Calu3 (cell line): ENCODE measurements at regions of chr2 and their contacts with region 1.

Region 1: DNA sequence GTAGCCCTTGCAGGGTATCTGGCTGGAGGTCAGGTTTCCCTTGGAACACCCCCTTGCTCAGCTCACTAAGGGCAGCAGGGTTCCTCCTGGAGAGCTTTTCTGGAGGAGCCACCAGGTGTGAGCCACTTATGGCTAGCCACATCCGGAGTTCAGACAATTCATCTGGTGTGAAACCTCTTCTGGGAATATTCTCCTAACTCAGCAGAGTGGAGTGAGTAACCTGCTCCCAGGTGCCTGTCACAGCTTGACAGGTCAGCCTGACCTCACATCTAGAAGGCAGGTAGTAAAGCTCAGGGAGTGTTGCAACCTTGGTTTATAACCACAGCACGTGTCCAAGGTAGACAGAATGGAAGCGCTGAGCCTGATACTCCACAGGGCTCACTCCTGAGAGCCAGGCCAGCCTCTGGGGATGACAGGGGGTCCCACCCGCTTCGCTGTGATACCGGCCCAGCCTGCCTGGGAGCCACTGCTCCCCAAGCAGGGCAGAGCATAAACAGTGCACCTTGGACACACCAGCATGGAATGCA is 62.6 kb upstream of the TGFA start:
- DNase-seq: peak; percentile 14
- H3K4me3 Mint-ChIP-seq: no peak overlapping the region
- H3K27ac Mint-ChIP-seq: no peak overlapping the region
- H3K4me1 Mint-ChIP-seq: peaks cover 16% of the 10 kb centered on the region
- H3K27me3 Mint-ChIP-seq: no peaks in the 10 kb centered on the region
- CTCF ChIP-seq: no peak

Region 2: GRCh38 chr2:70301344-70302194 is 314.7 kb before region 1 on chr2 and contains the start of gene FAM136A:
- CTCF ChIA-PET with region 1: interaction called, 26 read pairs
- intact Hi-C with region 1: loop called (anchors 10 kb)
- DNase-seq: peak; percentile 94
- H3K4me3 Mint-ChIP-seq: peak within 1 kb of the TSS; percentile 90
- H3K27ac Mint-ChIP-seq: peak within 1 kb of the TSS; percentile 94
- H3K4me1 Mint-ChIP-seq: peaks cover 10% of the 10 kb centered on the region
- H3K27me3 Mint-ChIP-seq: no peaks in the 10 kb centered on the region
- CTCF ChIP-seq: peak; percentile 76
- total RNA-seq, gene FAM136A: 53.7 and 60.4 TPM in 2 replicates

Region 3: GRCh38 chr2:70328921-70329561 is 287.2 kb before region 1 on chr2:
- CTCF ChIA-PET with region 1: interaction called, 12 read pairs
- intact Hi-C with region 1: no loop called
- DNase-seq: peak; percentile 91
- H3K4me3 Mint-ChIP-seq: peak overlapping the region; percentile 40
- H3K27ac Mint-ChIP-seq: peak overlapping the region; percentile 75
- H3K4me1 Mint-ChIP-seq: peaks cover 27% of the 10 kb centered on the region
- H3K27me3 Mint-ChIP-seq: no peaks in the 10 kb centered on the region
- CTCF ChIP-seq: no peak

Region 4: GRCh38 chr2:70509553-70509952 is 106.7 kb before region 1 on chr2:
- CTCF ChIA-PET with region 1: interaction called, 7 read pairs
- intact Hi-C with region 1: loop called (anchors 5 kb)
- DNase-seq: peak; percentile 82
- H3K4me3 Mint-ChIP-seq: peak overlapping the region; percentile 57
- H3K27ac Mint-ChIP-seq: peak overlapping the region; percentile 97
- H3K4me1 Mint-ChIP-seq: peaks cover 72% of the 10 kb centered on the region
- H3K27me3 Mint-ChIP-seq: no peaks in the 10 kb centered on the region
- CTCF ChIP-seq: no peak

Region 5: DNA sequence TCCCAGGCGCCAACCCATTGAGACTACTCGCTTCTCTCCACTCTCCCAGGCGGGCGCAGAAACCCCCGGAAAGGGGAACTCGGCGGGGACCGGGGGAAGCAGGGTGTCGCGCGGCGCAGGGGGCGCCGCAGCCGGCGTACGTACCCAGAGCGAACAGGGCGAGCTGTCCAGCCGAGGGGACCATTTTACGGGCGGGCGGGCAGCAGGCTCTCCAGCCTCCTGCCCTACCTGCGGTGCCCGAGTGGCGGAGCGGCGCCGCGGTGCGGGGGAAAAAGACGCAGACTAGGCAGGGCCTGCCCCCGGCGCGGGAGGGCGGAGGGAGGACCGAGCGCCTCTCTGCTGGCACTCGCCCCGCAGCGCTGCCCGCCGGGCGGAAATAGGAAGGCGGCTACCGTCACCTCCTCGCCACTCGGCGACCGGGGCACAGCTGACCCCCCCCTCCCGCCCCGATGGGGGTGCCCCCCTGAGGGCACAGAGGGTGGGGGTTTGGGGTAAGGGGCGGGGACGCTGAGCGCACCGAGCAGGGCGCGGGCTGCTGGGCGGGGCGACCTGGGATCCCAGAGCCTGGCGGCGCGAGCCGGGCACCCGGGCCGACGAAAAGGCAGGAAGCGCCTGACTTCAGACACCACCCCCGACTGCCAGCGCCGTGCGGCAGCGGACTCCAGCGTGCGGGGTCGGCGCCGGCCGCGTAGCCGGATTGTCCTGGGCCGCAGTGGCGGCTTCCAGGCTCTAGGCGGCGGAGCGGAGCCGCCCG is 62.5 kb before region 1 on chr2 and contains the start of gene TGFA:
- CTCF ChIA-PET with region 1: interaction called, 17 read pairs
- intact Hi-C with region 1: loop called (anchors 1 kb)
- DNase-seq: peak; percentile 96
- H3K4me3 Mint-ChIP-seq: peak within 1 kb of the TSS; percentile 99
- H3K27ac Mint-ChIP-seq: peak within 1 kb of the TSS; percentile 95
- H3K4me1 Mint-ChIP-seq: peaks cover 39% of the 10 kb centered on the region
- H3K27me3 Mint-ChIP-seq: no peaks in the 10 kb centered on the region
- CTCF ChIP-seq: no peak
- total RNA-seq, gene TGFA: 80.0 and 104 TPM in 2 replicates